H1 (cell line): ENCODE measurements at regions of chr5 and their contacts with region 1.

Region 1: DNA sequence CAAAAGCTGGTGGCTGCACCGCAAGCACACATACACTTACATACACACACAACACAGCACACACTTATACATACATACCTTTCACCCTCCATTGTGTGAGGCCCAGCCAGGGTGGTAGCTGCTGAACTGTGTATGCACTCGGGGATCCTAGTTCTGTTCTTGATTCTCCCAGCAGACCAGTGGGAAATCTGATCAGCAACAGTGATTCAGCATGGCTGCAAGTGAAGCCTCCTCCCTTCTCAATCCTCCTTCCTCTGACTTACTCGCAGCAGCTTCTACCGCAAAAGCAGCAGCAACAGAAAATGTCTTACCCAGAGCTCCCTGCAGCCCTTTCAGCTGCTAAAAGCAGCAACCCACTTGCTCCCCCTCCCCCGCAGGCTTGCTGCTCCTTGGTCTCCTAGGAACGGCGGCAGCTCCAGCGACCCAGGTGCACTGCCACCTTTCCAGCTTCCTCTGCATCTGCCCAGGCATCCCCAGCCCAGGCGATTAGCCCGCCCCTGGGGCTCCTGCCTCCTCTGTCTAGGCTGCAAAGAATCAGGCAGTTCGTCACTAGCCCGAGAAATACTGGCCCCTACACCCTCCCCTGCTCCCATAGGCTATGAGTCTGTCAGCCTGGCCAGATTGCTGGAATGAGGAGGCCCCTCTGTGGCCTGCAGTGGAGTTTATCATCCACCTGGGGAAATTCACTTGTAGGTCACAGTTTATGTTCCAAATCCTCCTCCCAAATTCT is at the start of gene KLHL3:
- DNase-seq: peak; percentile 76 to 87
- H3K4me3 ChIP-seq: peak within 1 kb of the TSS; percentile 67 to 90 (median 72)
- H3K27ac ChIP-seq: peak within 1 kb of the TSS; percentile 63
- H3K4me1 ChIP-seq: peaks cover 3 to 14% (median 6%) of the 10 kb centered on the region in 4 experiments; a peak in 5 of 7 replicates
- H3K27me3 ChIP-seq: no peaks in the 10 kb centered on the region
- CTCF ChIP-seq: peak; percentile 38 to 60 (median 39)
- EP300 ChIP-seq: no peak
- POLR2A ChIP-seq: peak in 1 of 2 experiments; percentile 59; a peak in 2 of 3 replicates
- RAD21 ChIP-seq: peak; percentile 76 to 79
- total RNA-seq, gene KLHL3: 10.5 and 13.7 TPM in 2 replicates

Region 2: GRCh38 chr5:137754126-137754960 is 18.6 kb after region 1 on chr5 and contains the start of gene HNRNPA0:
- CTCF ChIA-PET with region 1: interaction called, 28 read pairs
- POLR2A ChIA-PET with region 1: interaction called, 43 read pairs
- DNase-seq: peak; percentile 82 to 96
- H3K4me3 ChIP-seq: peak within 1 kb of the TSS; percentile 92 to 100 (median 100)
- H3K27ac ChIP-seq: peak within 1 kb of the TSS; percentile 100
- H3K4me1 ChIP-seq: peaks cover 0 to 3% (median 0%) of the 10 kb centered on the region in 4 experiments; a peak in 3 of 7 replicates
- H3K27me3 ChIP-seq: no peaks in the 10 kb centered on the region
- CTCF ChIP-seq: no peak
- EP300 ChIP-seq: peak; percentile 18 to 100; a peak in 2 of 3 replicates
- POLR2A ChIP-seq: peak; percentile 97 to 99
- RAD21 ChIP-seq: no peak; a peak in 1 of 4 replicates
- total RNA-seq, gene HNRNPA0: 71.3 and 74.9 TPM in 2 replicates